Ascending aorta (tissue), 2 donors: ENCODE measurements at regions of chr4 and their contacts with region 1.

Region 1: DNA sequence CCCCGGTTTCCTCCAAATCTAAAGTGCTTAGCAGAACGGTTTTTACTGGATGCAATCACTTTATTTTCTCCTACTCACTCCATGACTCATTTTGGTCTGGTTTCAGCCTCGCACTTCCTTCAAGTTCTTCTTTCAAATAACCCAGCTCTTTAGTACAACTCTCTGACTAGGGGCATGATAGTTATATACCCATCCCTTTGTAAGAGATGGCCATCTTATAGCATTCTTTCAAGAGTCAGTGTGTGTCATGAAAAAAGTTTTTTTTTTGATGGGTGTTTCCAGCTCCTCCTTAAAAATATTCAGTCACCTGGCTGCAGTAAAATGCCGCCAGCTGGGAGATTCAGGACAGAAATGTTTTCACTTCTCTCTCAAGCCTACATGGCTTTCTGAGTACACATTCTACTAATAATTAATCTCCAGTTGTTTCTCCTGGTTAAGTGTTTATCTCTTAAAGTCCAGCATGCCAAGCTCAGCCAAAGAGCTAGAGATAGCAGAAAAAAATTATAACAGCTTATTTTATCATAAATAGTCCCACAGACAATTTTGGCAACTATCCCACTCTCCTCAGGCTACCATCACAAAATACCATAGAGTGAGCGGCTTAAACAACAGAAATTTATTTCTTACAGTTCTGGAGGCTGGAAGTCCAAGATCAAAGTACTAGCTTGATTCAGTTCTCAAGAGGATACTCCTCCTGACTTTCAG is 139.3 kb downstream of the GASK1B start:
- DNase-seq: no peak
- H3K4me3 ChIP-seq: no peak overlapping the region
- H3K27ac ChIP-seq: peak overlapping the region; percentile 31 to 67
- H3K4me1 ChIP-seq: no peaks in the 10 kb centered on the region
- H3K27me3 ChIP-seq: no peaks in the 10 kb centered on the region
- CTCF ChIP-seq: no peak

Region 2: DNA sequence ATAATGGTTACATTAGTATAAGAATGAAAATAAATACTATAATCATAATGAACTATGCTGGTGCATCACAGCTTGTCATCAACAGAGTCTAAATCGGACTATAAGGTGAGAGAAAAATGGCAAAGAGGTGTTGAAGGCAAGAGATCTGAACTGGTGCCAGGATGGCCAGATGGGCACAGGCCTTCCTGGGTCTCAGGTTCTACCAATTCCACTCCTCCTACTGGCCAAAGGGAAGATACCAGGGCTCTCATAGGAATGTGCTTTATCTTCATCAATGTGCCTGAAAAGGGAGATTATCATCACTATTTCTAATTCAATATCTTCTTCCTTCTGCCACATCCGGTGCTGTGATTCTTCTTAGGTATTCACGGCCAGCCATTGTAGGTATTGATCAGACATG is 31.6 kb after region 1 on chr4:
- intact Hi-C with region 1: loop called (anchors 5 kb)
- DNase-seq: no peak
- H3K4me3 ChIP-seq: no peak overlapping the region
- H3K27ac ChIP-seq: no peak overlapping the region
- H3K4me1 ChIP-seq: no peaks in the 10 kb centered on the region
- H3K27me3 ChIP-seq: no peaks in the 10 kb centered on the region
- CTCF ChIP-seq: no peak